Colonic mucosa (tissue), 4 donors: ENCODE measurements at regions of chrX and their contacts with region 1.

Region 1: DNA sequence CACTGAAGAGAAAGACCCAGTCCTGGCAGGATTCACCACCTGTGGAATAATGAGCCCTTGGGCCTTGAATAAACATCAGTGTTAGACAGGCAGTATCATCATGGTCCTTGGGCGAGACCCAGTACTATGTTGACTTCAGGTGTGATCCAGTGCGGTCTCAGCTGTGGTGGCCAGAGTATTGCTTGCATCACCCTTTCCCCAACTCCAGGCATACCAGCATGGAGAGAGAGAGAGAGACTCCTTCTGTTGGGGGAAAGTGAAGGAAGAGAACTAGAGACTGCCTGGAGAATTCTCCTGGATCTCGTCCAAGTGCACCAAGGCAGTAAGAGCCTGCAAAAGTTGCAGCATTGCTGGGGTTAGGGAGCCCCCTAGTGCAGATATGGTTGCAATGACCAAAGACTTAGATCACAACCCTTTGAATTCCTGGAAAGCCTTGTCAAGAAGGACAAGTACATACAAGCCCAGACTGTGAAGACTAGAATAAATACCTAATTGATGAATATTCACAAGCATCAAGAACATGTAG is 61.1 kb upstream of the VAMP7 start:
- DNase-seq: peak; percentile 69
- H3K4me3 ChIP-seq: no peak overlapping the region
- H3K27ac ChIP-seq: no peak overlapping the region
- H3K4me1 ChIP-seq: no peaks in the 10 kb centered on the region
- H3K27me3 ChIP-seq: no peaks in the 10 kb centered on the region
- CTCF ChIP-seq: peak; percentile 43

Region 2: DNA sequence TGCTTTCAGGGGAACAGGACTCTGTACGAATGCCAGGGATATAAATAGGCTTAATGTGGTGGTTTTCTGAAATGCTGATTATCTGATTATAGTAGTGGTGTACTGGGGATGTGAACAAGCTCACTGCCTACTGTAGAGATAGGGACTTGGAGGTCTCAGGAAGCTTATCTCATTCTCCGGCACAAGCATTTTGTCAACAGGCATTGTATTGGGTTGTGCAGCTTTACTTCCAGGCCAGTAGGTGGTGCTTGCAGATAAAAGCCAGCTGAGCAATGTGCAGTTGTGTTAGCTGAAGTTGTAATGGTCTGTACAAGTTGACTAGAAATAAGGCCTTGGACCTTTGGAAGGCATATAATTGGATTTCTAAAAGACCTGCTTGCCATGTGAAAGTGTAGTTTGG is 157.7 kb before region 1 on chrX:
- intact Hi-C with region 1: loop called (anchors 5 kb)
- DNase-seq: no peak
- H3K4me3 ChIP-seq: no peak overlapping the region
- H3K27ac ChIP-seq: no peak overlapping the region
- H3K4me1 ChIP-seq: no peaks in the 10 kb centered on the region
- H3K27me3 ChIP-seq: no peaks in the 10 kb centered on the region
- CTCF ChIP-seq: peak; percentile 23